Ovary (tissue), 10 donors: ENCODE measurements at regions of chr9 and their contacts with region 1.

Region 1: GRCh38 chr9:124415102-124415851 is at the start of gene PSMB7:
- DNase-seq: peak; percentile 94 to 98 (median 96)
- H3K4me3 ChIP-seq: peak within 1 kb of the TSS; percentile 62
- H3K27ac ChIP-seq: no peak within 1 kb of the TSS
- H3K4me1 ChIP-seq: peaks cover 6% of the 10 kb centered on the region
- H3K27me3 ChIP-seq: no peaks in the 10 kb centered on the region
- CTCF ChIP-seq: peak; percentile 75 to 82 (median 75)
- EP300 ChIP-seq: no peak
- POLR2A ChIP-seq: peak; percentile 23
- total RNA-seq, gene PSMB7: 88.0 to 102 (median 92.7) TPM

Region 2: GRCh38 chr9:124537926-124538325 is 122.6 kb after region 1 on chr9:
- intact Hi-C with region 1: loop called (anchors 2 to 5 kb)
- DNase-seq: no peak
- H3K4me3 ChIP-seq: no peak overlapping the region
- H3K27ac ChIP-seq: no peak overlapping the region
- H3K4me1 ChIP-seq: no peaks in the 10 kb centered on the region
- H3K27me3 ChIP-seq: no peaks in the 10 kb centered on the region
- CTCF ChIP-seq: no peak
- EP300 ChIP-seq: no peak
- POLR2A ChIP-seq: no peak